Gastrocnemius medialis (tissue), 4 donors: ENCODE measurements at regions of chrX and their contacts with region 1.

Region 1: GRCh38 chrX:21839334-21840192 is at the start of gene MBTPS2:
- DNase-seq: peak; percentile 66 to 79
- ATAC-seq: peak; percentile 97
- H3K4me3 ChIP-seq: peak within 1 kb of the TSS; percentile 67 to 79 (median 76)
- H3K27ac ChIP-seq: peak within 1 kb of the TSS; percentile 85 to 91 (median 86)
- H3K4me1 ChIP-seq: peaks cover 4 to 11% of the 10 kb centered on the region in 2 donors
- H3K27me3 ChIP-seq: no peaks in the 10 kb centered on the region
- CTCF ChIP-seq: peak in 1 of 5 experiments; percentile 3
- POLR2A ChIP-seq: peak; percentile 24 to 36
- total RNA-seq, gene MBTPS2: 4.5 to 11.3 (median 6.0) TPM

Region 2: DNA sequence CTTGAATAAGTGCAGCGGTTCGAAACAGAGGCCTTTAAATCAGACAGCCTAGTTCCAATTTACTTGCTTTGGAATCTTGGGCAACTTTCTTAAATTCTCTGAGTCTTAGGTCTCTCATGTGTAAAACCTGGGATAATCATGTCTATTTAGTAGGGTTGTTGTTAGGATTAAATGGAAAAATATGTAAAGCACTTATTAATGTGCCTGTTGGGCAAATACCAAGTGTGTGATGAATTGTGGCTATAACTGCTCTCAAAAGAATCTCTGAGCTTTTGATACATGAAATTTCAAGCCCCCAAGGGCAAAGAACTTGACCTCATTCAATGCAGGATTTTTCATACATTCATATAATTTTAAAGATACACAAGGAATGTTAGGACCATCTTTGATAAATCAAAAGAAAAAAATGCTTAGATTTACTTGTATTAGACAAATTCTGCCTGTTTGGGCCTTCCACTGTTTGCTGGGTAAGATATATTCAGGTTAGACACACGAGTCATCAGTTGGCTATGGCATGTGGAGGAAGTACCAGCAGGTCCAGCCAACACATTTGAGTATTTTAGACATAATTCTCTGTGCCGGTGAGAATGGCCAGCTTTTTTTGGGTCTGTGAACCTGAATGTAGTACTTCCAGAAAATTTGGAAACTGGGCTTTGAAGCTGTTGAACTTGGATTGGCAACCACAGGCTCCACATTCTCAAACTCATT is 706.7 kb before region 1 on chrX:
- in situ Hi-C with region 1: no loop called
- intact Hi-C with region 1: no loop called
- DNase-seq: no peak
- ATAC-seq: no peak
- H3K4me3 ChIP-seq: no peak overlapping the region
- H3K27ac ChIP-seq: no peak overlapping the region
- H3K4me1 ChIP-seq: no peaks in the 10 kb centered on the region
- H3K27me3 ChIP-seq: no peaks in the 10 kb centered on the region
- CTCF ChIP-seq: no peak
- POLR2A ChIP-seq: no peak

Region 3: DNA sequence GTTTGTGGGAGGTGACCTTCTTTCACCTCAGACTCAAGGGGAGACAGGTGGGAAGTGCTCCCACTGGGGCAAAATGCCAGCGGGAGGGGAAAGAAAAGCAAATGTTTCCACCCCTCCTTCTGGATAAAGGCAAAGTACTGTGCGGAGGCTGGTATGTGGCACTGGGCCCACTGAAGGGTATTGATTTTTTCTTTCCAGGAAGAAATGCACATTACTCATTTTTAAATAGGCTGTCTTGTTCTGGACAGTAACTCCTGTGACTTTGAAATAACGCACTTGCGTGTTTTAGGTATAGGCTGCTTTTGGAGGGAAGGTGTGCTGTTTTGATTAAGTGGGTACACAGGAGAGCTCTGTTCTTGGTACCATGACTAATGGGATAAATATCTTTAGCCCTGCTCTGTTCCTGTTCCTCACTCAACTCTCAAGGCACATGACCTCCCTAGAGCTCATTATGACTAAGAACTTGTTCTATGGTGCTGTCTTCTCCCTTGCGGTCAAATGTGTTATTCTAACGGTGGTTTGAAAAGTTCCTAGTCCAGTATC is 40.8 kb before region 1 on chrX:
- in situ Hi-C with region 1: no loop called
- intact Hi-C with region 1: loop called (anchors 2 kb)
- DNase-seq: peak in 1 of 2 donors; percentile 14
- ATAC-seq: peak; percentile 83 to 86
- H3K4me3 ChIP-seq: no peak overlapping the region
- H3K27ac ChIP-seq: peak overlapping the region; percentile 76 to 87 (median 80)
- H3K4me1 ChIP-seq: peaks cover 12 to 16% of the 10 kb centered on the region in 2 donors
- H3K27me3 ChIP-seq: no peaks in the 10 kb centered on the region
- CTCF ChIP-seq: peak in 1 of 5 experiments; percentile 15
- POLR2A ChIP-seq: no peak